ENCODE measurements at regions of chr17 and their contacts with region 1.

Region 1: GRCh38 chr17:76408052-76408849 is 23.8 kb downstream of the SPHK1 start:
- DNase-seq: peak in 1 of 2 donors; percentile 64
- H3K4me3 ChIP-seq: no peak overlapping the region
- H3K27ac ChIP-seq: no peak overlapping the region
- H3K4me1 ChIP-seq: peaks cover 0 to 14% (median 2%) of the 10 kb centered on the region in 4 donors
- H3K27me3 ChIP-seq: no peaks in the 10 kb centered on the region
- CTCF ChIP-seq: peak; percentile 49 to 74

Region 2: GRCh38 chr17:76458580-76459490 is 50.6 kb after region 1 on chr17:
- intact Hi-C with region 1: loop called (anchors 2 kb)
- DNase-seq: no peak
- H3K4me3 ChIP-seq: no peak overlapping the region
- H3K27ac ChIP-seq: no peak overlapping the region
- H3K4me1 ChIP-seq: no peaks in the 10 kb centered on the region
- H3K27me3 ChIP-seq: peaks cover 0 to 17% of the 10 kb centered on the region in 2 donors
- CTCF ChIP-seq: no peak

Region 3: GRCh38 chr17:76501018-76501826 is 93.0 kb after region 1 on chr17 and contains the start of gene RHBDF2:
- intact Hi-C with region 1: loop called (anchors 10 kb)
- DNase-seq: peak; percentile 81 to 94
- H3K4me3 ChIP-seq: peak within 1 kb of the TSS; percentile 48 to 79
- H3K27ac ChIP-seq: peak within 1 kb of the TSS; percentile 76 to 85
- H3K4me1 ChIP-seq: peaks cover 0 to 50% (median 39%) of the 10 kb centered on the region in 4 donors
- H3K27me3 ChIP-seq: peaks cover 0 to 6% of the 10 kb centered on the region in 2 donors
- CTCF ChIP-seq: no peak

Region 4: DNA sequence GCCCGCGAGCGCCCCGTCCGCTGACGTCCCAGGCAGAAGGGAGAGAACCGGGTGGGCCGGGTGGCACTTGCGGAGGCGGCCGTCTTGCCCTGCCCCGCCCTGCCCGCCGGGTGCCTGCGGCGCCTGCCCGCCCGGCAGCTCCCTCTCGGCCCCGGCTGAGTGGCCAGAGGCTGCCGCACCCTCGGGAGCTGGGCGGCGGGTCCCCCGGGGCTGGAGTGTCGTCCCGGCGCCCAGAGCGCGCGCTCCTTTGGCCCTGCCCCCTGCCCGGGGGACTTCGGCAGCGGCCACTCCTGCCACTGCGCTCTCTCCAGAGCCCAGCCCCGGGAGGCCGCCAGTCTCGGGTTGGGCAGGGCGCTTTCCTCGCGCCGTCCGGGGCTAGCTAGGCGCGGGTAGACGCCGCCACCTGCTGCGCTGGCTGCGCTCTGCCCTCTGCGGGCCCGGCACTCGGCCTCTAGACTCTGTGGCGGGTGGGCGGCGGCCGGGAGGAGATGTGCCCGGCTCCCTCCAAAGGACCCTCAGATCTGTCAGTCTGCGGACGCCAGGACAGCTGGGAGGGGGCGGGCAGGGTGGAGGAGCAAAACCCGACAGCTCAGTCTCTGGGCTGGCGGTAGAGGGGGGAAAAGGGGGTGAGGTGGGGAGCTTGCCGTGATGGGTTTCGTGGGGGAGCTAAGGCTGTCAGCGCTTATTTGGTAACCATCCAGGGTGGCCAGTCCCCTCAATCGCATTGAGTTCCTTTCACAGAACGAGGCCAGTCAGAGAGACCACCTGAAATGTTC is 177.8 kb after region 1 on chr17 and contains the start of gene ST6GALNAC2:
- intact Hi-C with region 1: no loop called
- DNase-seq: peak; percentile 41 to 73
- H3K4me3 ChIP-seq: peak within 1 kb of the TSS; percentile 46 to 63
- H3K27ac ChIP-seq: no peak within 1 kb of the TSS
- H3K4me1 ChIP-seq: peaks cover 4 to 25% (median 19%) of the 10 kb centered on the region in 4 donors
- H3K27me3 ChIP-seq: peaks cover 0 to 55% of the 10 kb centered on the region in 2 donors
- CTCF ChIP-seq: peak in 1 of 2 experiments; percentile 31

Measured in tibial artery (tissue), 4 donors.